Esophagus muscularis mucosa (tissue), 4 donors: ENCODE measurements at regions of chr10 and their contacts with region 1.

Region 1: DNA sequence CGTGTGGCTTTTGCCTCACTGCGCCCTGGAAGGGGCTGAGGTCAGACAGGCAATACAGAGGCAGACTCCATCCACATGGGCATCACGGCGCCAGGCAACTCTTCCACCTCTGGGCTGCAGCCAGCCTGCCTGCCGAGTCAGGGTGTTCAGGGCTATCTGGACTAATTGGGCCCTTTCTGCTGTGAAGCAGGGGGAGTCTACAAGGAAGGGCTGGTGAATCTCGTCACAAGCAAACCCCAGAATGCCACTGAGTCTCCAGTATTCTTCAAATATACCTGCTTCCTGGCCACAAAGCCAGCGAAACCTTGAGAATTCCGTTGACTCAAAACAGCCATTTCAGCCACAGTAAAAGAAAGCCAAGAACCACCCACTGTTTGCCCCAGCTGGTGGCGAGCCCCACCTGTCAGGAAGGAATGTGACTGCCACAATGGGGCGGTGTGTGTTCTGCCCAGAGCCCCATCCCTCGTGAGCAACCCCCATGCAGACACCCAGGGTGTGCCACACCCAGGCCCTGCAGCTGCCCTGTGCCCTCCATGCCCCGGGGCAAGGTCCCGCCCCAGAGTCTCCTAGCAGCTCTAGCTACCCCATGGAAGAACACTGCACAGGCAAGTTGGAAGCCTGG is 117.3 kb downstream of the FAM53B start:
- DNase-seq: no peak
- H3K4me3 ChIP-seq: no peak overlapping the region
- H3K27ac ChIP-seq: peak overlapping the region in 1 of 4 donors; percentile 59
- H3K4me1 ChIP-seq: peaks cover 72 to 80% (median 78%) of the 10 kb centered on the region in 4 donors
- H3K27me3 ChIP-seq: no peaks in the 10 kb centered on the region
- CTCF ChIP-seq: no peak
- EP300 ChIP-seq: no peak
- POLR2A ChIP-seq: no peak

Region 2: DNA sequence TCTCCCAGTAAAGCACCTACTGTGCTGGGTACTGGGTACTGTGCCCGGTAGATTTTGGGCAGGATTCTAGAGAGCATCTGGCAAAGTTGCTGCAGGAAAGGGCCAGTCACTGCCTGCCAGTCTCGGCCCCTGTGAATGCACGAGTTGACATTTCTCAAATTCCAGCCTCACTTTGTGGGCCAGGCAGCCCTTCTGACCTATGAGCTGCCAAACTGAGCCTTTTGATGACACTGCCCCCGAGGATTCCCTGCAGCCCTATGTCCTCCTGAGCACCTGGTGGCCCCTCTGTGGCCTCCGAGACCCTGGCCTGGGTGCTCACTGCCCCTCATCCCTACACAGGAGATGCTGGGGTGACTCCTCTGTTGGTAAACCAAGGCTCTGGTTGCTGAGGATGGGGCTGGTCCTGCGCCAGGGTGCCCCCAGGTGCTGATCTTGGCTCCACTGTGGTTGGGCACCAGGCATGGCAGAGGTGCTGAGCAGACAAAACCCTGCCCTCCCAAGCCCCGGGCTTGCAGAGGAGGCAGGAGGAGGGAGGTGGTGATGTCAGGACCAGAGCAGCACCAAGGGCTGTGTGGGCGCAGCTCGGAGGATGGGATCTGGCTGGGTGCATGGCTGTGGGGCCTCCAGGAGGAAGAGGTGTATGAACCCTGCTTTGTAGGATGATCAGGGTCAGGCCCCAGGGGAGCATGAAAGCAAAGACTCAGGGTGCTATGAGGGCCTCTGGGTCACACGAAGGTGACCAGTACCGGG is 149.1 kb before region 1 on chr10:
- intact Hi-C with region 1: no loop called
- DNase-seq: no peak
- H3K4me3 ChIP-seq: no peak overlapping the region
- H3K27ac ChIP-seq: no peak overlapping the region
- H3K4me1 ChIP-seq: no peaks in the 10 kb centered on the region
- H3K27me3 ChIP-seq: no peaks in the 10 kb centered on the region
- CTCF ChIP-seq: no peak
- EP300 ChIP-seq: no peak
- POLR2A ChIP-seq: no peak

Region 3: GRCh38 chr10:124539935-124540641 is 86.8 kb before region 1 on chr10:
- intact Hi-C with region 1: loop called (anchors 5 kb)
- DNase-seq: no peak
- H3K4me3 ChIP-seq: peak overlapping the region in 1 of 4 donors; percentile 21
- H3K27ac ChIP-seq: no peak overlapping the region
- H3K4me1 ChIP-seq: peaks cover 9 to 23% (median 16%) of the 10 kb centered on the region in 4 donors
- H3K27me3 ChIP-seq: no peaks in the 10 kb centered on the region
- CTCF ChIP-seq: peak; percentile 84 to 89 (median 89)
- EP300 ChIP-seq: no peak
- POLR2A ChIP-seq: no peak